CD14-positive monocyte (primary cell): ENCODE measurements at regions of chr19 and their contacts with region 1.

Region 1: DNA sequence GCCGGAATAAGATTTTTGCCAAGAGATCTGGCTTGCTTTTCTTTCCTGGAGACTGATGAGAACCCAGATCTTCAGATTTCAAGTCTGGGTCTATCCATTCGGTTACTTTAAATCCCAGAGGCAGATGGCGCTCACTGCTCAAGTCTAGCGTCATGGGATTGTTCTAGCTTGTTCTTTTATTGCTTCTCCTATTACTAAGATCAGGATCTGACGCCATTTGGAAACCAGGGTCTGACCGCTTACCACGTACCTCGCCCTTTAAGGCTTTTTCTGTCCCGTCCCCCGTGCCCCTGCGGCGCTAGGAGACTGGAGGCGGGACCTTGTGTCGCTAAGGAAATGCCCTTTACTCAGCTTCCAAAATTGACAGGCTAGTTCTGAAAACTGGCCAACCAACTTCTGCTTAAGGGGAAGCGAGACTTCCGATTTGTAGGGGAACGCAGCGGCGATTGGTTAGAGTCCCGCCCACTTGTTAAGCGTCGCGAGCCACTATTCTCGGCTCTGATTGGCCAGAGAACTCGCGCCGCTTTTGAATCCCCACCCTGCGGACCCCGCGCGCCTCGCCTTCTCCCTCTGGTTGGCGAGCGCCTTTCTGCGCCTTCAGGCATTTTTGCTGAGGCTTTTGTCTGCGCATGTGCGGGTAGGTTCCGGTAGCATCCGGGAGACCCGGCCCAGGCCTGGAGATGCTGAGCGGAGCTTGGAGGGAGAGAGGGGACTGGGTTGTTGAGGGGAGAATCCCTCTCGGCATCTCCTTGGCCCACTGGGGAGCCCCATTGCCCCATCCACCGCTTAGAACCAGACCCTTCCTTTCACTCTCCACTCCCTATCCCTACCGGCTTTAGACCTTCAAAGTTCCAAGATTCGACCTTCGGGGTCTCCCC is 3.8 kb upstream of the C19orf84 start:
- DNase-seq: peak; percentile 96 to 98 (median 98)
- H3K4me3 ChIP-seq: peak overlapping the region; percentile 17 to 74 (median 31)
- H3K4me3 Mint-ChIP-seq: peak overlapping the region; percentile 69 to 82
- H3K27ac ChIP-seq: peak overlapping the region; percentile 76 to 79
- H3K27ac Mint-ChIP-seq: peak overlapping the region; percentile 88 to 97 (median 94)
- H3K4me1 ChIP-seq: peaks cover 35 to 40% of the 10 kb centered on the region in 2 donors
- H3K4me1 Mint-ChIP-seq: peaks cover 43% of the 10 kb centered on the region
- H3K27me3 ChIP-seq: no peaks in the 10 kb centered on the region
- H3K27me3 Mint-ChIP-seq: peaks cover 0 to 4% (median 1%) of the 10 kb centered on the region in 3 donors
- CTCF ChIP-seq: peak; percentile 32

Region 2: DNA sequence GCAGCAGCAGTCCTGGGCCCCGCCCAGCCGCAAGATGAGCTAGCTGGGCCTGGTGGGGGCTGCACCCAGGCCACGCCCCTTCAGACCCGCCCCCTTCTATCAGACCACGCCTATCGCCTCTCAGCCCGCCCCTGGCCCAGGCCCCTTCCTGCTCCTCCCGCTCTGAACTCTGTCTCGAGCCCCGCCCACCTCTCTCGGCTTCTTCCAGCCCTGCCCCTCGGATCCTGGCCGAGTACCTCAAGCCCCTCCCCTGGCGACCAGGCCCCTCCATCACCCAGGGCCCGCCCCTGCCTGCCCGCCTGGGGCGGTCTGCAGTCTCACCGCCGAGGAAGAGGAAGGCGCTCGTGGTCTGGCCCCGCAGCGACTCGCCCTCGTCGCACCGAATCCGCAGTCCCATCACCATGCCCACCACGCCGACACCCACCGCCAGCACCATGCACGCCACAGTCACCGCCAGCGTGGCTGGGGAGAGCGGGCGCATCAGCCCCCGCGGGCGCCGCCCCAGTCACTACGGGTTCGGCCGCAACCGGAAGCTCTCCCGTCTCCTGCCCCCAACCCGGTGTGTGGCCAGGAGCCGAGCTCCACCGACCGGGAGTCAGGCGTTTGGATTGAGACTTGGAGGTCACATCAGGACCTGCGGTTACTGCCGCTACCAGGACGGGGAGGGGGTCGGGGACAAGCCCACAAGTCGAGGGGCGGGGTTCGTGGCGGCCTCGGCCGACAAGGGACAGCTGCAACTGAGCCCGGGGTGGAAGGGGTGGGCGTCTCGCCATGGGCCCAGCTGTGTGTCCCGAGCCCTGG is 26.4 kb before region 1 on chr19:
- intact Hi-C with region 1: loop called in 1 of 2 experiments (anchors 2 kb)
- DNase-seq: peak; percentile 94 to 98 (median 95)
- H3K4me3 ChIP-seq: peak overlapping the region; percentile 89 to 93 (median 91)
- H3K4me3 Mint-ChIP-seq: peak overlapping the region; percentile 96 to 99
- H3K27ac ChIP-seq: peak overlapping the region; percentile 92 to 93
- H3K27ac Mint-ChIP-seq: peak overlapping the region; percentile 93 to 99 (median 97)
- H3K4me1 ChIP-seq: peaks cover 51 to 83% of the 10 kb centered on the region in 2 donors
- H3K4me1 Mint-ChIP-seq: peaks cover 71% of the 10 kb centered on the region
- H3K27me3 ChIP-seq: no peaks in the 10 kb centered on the region
- H3K27me3 Mint-ChIP-seq: peaks cover 0 to 6% (median 0%) of the 10 kb centered on the region in 3 donors
- CTCF ChIP-seq: no peak

Region 3: DNA sequence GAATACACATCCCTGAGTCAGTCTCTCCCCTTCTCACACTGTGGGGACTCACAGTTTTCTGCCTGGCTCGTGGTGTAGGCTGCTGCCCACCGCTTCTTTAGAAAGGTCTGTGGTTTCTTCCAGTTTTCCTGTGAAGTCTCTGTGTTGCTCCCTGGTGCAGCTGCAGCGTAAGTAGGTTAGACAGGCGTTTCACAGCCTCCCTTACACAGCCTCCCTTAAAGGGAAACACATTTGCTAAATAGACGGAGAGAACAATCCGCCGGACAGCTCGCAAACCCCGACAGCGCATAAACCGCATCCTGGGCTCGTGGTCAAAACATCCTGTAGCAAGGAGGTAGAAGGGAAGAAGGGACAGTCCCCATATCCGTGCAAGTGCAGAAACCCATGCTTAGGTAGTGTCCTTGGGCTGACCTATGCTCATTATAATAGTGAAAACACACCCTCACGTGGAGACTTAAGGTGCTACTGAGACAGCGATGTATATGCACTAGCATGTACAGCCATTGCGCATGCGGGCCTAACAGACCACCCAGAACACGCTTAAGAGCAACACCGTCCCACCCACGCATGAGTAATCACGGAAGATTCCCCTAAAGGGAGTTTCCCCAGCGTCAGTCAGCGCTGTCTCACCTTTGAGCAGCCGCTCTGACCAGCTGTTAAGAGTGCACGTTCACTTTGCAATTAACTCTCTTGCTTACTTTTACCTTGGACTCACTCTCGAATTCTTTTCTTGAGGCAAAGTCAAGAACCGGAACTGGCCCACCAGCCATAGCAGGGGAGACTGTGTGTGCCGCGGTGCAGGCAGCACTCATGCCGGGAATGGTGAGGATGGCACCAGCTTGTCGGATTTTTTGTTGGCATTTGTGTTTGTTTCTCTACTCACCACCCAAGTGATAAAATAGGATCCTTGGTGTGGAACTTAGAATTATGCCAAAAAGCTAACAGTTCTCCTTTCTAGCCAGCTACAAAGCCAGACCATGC is 47.5 kb after region 1 on chr19:
- intact Hi-C with region 1: loop called (anchors 2 to 5 kb)
- DNase-seq: peak; percentile 51 to 88 (median 54)
- H3K4me3 ChIP-seq: peak overlapping the region in 1 of 3 experiments; percentile 41
- H3K4me3 Mint-ChIP-seq: peak overlapping the region; percentile 20 to 87
- H3K27ac ChIP-seq: no peak overlapping the region
- H3K27ac Mint-ChIP-seq: peak overlapping the region in 4 of 7 donors; percentile 28 to 82 (median 60)
- H3K4me1 ChIP-seq: peaks cover 16 to 26% of the 10 kb centered on the region in 2 donors
- H3K4me1 Mint-ChIP-seq: peaks cover 22% of the 10 kb centered on the region
- H3K27me3 ChIP-seq: peaks cover 20 to 36% of the 10 kb centered on the region in 2 donors
- H3K27me3 Mint-ChIP-seq: peaks cover 34 to 44% (median 35%) of the 10 kb centered on the region in 3 donors
- CTCF ChIP-seq: no peak

Region 4: GRCh38 chr19:51501594-51502263 is 107.5 kb after region 1 on chr19 and contains the start of gene SIGLEC12:
- intact Hi-C with region 1: loop called in 1 of 2 experiments (anchors 10 kb)
- DNase-seq: peak; percentile 75 to 88 (median 84)
- H3K4me3 ChIP-seq: peak within 1 kb of the TSS in 1 of 3 experiments; percentile 66
- H3K4me3 Mint-ChIP-seq: peak within 1 kb of the TSS; percentile 58 to 84
- H3K27ac ChIP-seq: peak within 1 kb of the TSS in 1 of 2 donors; percentile 62
- H3K27ac Mint-ChIP-seq: peak within 1 kb of the TSS; percentile 75 to 95 (median 92)
- H3K4me1 ChIP-seq: peaks cover 64 to 74% of the 10 kb centered on the region in 2 donors
- H3K4me1 Mint-ChIP-seq: peaks cover 71% of the 10 kb centered on the region
- H3K27me3 ChIP-seq: no peaks in the 10 kb centered on the region
- H3K27me3 Mint-ChIP-seq: peaks cover 0 to 2% (median 0%) of the 10 kb centered on the region in 3 donors
- CTCF ChIP-seq: no peak
- polyA plus RNA-seq, gene SIGLEC12: 0.24 to 1.8 (median 1.3) TPM